AG04450 (cell line): ENCODE measurements at regions of chr2 and their contacts with region 1.

Region 1: DNA sequence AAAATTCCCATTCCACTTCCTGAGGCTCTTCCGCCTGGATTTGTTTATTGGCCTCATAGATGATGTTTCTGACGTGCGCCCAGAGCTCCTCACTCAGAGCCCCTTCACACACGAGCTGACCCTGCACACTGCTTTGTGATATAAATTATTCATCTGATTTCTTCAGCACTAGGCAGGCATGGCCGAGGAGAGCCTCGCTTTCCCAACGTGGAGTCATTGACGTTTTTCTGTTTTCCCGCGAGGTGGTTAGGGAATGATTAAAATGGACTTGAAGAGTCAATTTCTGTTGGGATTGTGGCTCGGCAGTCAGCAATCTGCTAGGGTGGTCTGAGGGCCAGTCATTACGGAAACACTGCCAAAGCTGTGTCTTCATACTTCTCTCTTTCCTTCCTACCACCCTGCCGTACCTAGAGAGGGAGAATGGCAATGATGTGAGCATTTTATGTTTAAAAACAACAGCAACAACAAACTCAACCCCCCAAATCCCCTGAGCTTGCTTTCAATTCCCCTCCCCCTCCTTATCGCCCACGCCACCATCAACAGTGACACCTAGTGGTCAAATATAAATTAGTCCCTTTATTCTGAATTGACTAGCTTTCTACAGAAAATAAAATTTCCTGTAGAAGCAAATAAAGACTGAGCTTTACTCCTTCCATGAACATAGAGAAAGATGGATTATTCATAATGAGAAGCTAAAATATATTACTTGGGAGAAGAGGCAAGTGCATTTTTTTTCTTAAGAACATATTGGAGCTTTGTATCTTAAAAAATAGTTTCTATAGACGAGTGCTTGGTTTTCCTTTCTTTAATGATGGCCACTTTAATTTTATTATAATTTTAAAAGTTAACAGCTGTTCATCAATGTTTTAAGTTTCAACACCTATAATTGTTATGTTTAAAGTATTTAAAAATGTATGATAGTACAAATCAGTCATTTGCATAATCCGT is 285.1 kb downstream of the MTX2 start:
- DNase-seq: peak; percentile 34
- H3K4me3 ChIP-seq: peak overlapping the region; percentile 59
- H3K27ac ChIP-seq: no peak overlapping the region
- H3K27me3 ChIP-seq: no peaks in the 10 kb centered on the region
- CTCF ChIP-seq: peak; percentile 78

Region 2: GRCh38 chr2:176157499-176158185 is 396.7 kb before region 1 on chr2:
- CTCF ChIA-PET with region 1: interaction called, 11 read pairs
- POLR2A ChIA-PET with region 1: no interaction called
- DNase-seq: no peak
- H3K4me3 ChIP-seq: no peak overlapping the region
- H3K27ac ChIP-seq: no peak overlapping the region
- H3K27me3 ChIP-seq: peaks cover 92% of the 10 kb centered on the region
- CTCF ChIP-seq: no peak

Region 3: DNA sequence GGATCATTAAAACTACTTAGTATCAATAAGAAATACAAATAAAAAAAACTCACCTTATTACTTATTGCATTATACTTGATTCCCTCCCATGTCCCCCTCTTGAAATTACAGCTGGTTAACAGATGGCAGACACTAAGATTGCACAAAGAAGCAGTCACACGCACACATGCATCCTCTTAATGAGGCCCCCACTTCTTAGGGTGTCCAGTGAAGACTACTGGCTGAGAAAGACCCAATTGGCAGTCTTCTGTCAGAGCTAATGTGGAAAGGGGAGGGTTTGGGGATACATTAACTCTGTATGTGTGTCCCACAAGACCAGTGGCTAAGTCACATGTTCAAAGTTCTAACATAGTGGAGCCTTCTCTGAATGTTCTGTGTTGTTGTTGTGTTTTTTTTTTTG is 74.4 kb before region 1 on chr2:
- CTCF ChIA-PET with region 1: interaction called, 12 read pairs
- POLR2A ChIA-PET with region 1: no interaction called
- DNase-seq: no peak
- H3K4me3 ChIP-seq: no peak overlapping the region
- H3K27ac ChIP-seq: no peak overlapping the region
- H3K27me3 ChIP-seq: peaks cover 13% of the 10 kb centered on the region
- CTCF ChIP-seq: no peak

Region 4: GRCh38 chr2:176526995-176527901 is 27.1 kb before region 1 on chr2:
- CTCF ChIA-PET with region 1: interaction called, 19 read pairs
- POLR2A ChIA-PET with region 1: no interaction called
- DNase-seq: no peak
- H3K4me3 ChIP-seq: no peak overlapping the region
- H3K27ac ChIP-seq: no peak overlapping the region
- H3K27me3 ChIP-seq: peaks cover 5% of the 10 kb centered on the region
- CTCF ChIP-seq: no peak

Region 5: GRCh38 chr2:176574484-176575236 is 20.3 kb after region 1 on chr2:
- CTCF ChIA-PET with region 1: interaction called, 20 read pairs
- POLR2A ChIA-PET with region 1: no interaction called
- DNase-seq: no peak
- H3K4me3 ChIP-seq: no peak overlapping the region
- H3K27ac ChIP-seq: no peak overlapping the region
- H3K27me3 ChIP-seq: peaks cover 6% of the 10 kb centered on the region
- CTCF ChIP-seq: no peak

Region 6: DNA sequence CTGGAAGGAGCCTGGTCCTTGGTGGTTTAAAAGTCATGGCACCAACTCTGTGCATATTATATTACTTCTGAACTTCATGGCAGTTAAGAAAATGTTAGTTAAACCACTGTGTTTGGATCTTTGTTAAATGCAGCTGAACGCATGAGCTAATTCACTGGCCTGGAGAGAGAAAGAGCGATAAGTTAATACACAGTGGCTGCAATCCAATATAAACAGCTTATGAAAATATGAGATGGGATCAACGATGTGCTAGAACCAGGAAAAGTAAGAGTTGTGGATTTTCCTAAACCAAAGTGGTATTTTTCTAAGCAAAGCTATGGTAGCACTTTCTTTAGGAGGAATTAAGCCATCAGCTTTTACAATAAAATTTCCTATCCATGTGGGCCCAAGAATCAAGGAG is 41.6 kb after region 1 on chr2:
- CTCF ChIA-PET with region 1: interaction called, 19 read pairs
- POLR2A ChIA-PET with region 1: no interaction called
- DNase-seq: no peak
- H3K4me3 ChIP-seq: no peak overlapping the region
- H3K27ac ChIP-seq: no peak overlapping the region
- H3K27me3 ChIP-seq: peaks cover 10% of the 10 kb centered on the region
- CTCF ChIP-seq: no peak